MCF 10A (cell line): ENCODE measurements at regions of chr2 and their contacts with region 1.

Region 1: DNA sequence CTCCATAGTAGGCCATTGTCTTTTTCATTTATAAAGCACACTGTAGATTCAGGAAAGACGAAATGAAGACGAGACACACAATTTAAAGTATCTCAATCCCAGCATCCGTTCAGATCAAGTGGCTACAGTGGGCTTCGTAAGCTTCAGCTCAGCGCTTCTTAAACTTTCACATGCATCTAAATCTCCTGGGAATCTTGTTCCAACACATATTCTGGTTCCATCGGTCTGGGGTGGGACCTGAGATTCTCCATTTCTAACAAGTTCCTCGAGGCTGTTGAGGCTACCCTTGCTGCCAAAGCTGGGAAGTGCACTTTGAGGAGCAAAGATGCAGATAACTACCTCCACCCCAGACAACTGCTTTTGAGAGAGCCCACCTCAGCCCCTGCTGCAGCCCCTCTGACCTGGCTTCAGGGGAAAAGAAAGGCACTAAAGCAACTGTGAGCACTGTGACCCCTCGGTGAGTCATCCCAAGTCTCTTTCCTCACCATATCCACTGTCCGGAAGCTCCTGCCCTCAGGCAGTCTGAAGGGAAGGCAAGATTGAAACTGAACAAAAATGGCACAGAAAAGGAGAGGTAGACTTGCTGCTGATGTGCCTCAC is 201.1 kb upstream of the FBXO11 start:
- DNase-seq: peak; percentile 97
- H3K4me3 Mint-ChIP-seq: peak overlapping the region; percentile 62
- H3K27ac Mint-ChIP-seq: peak overlapping the region; percentile 89
- H3K4me1 Mint-ChIP-seq: peaks cover 22% of the 10 kb centered on the region
- H3K27me3 Mint-ChIP-seq: no peaks in the 10 kb centered on the region
- CTCF ChIP-seq: no peak

Region 2: DNA sequence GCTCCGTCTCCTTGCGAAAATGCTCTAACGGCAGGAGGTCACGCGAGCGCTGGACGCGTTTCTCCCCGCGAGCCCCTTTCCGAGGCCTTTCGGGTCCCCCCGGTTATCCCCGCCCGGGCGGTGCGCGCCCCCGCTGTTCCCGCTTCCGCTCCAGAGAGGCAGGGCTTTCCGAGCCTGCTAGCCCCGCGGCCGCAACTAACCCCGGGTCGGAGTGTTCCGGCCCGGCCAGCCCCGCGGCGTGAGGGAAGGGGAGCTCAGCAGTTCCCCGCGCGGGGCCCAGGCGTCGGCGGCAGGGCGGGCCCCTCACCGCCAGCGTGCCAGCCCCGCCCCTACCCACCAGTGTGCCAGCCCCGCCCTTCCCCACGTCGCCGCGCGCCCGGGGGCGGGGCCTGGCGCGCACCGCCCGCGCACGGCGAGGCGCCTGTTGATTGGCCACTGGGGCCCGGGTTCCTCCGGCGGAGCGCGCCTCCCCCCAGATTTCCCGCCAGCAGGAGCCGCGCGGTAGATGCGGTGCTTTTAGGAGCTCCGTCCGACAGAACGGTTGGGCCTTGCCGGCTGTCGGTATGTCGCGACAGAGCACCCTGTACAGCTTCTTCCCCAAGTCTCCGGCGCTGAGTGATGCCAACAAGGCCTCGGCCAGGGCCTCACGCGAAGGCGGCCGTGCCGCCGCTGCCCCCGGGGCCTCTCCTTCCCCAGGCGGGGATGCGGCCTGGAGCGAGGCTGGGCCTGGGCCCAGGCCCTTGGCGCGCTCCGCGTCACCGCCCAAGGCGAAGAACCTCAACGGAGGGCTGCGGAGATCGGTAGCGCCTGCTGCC is 324.5 kb before region 1 on chr2 and contains the start of gene MSH6:
- CTCF ChIA-PET with region 1: no interaction called
- POLR2A ChIA-PET with region 1: interaction called, 5 read pairs
- intact Hi-C with region 1: loop called (anchors 1 kb)
- DNase-seq: peak; percentile 86
- H3K4me3 Mint-ChIP-seq: peak within 1 kb of the TSS; percentile 92
- H3K27ac Mint-ChIP-seq: peak within 1 kb of the TSS; percentile 75
- H3K4me1 Mint-ChIP-seq: peaks cover 14% of the 10 kb centered on the region
- H3K27me3 Mint-ChIP-seq: no peaks in the 10 kb centered on the region
- CTCF ChIP-seq: no peak
- total RNA-seq, gene MSH6: 40.3 and 45.3 TPM in 2 replicates

Region 3: GRCh38 chr2:47849368-47849767 is 258.1 kb before region 1 on chr2:
- CTCF ChIA-PET with region 1: interaction called, 14 read pairs
- POLR2A ChIA-PET with region 1: interaction called, 3 read pairs
- intact Hi-C with region 1: no loop called
- DNase-seq: no peak
- H3K4me3 Mint-ChIP-seq: no peak overlapping the region
- H3K27ac Mint-ChIP-seq: no peak overlapping the region
- H3K4me1 Mint-ChIP-seq: peaks cover 16% of the 10 kb centered on the region
- H3K27me3 Mint-ChIP-seq: no peaks in the 10 kb centered on the region
- CTCF ChIP-seq: no peak

Region 4: DNA sequence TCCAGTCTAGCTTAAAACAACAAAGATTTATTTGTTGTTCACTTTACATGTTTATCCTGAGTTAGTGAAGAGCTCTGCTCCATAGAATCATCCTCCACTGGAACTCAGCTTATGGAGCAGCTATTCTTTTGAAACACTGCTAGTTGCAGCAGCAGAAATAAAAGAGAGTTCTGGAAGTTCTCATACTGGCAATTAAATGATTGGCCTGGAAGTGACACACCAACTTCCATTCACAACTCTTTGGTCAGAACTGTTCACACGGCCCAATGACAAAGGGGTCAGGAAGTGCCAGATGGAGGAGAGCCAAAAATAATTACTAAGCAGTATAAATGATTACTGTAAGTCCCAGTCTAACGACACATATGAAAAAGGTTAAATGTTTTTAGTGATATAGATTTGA is 240.2 kb before region 1 on chr2:
- CTCF ChIA-PET with region 1: interaction called, 17 read pairs
- POLR2A ChIA-PET with region 1: interaction called, 3 read pairs
- intact Hi-C with region 1: no loop called
- DNase-seq: peak; percentile 87
- H3K4me3 Mint-ChIP-seq: peak overlapping the region; percentile 4
- H3K27ac Mint-ChIP-seq: peak overlapping the region; percentile 34
- H3K4me1 Mint-ChIP-seq: peaks cover 22% of the 10 kb centered on the region
- H3K27me3 Mint-ChIP-seq: no peaks in the 10 kb centered on the region
- CTCF ChIP-seq: no peak

Region 5: DNA sequence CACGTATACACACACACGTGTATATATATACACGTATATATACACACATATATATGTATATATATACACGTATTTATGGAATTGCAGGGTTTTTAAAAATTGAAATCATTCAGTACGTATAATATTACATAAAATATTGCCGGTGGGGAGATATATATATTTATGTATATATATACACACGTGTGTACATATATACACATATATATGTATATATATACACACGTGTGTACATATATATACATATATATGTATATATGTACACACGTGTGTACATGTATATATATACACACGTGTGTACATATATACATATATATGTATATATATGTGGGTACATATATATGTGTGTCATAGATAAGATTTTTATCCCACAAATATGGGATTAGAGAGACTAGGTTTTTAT is 206.6 kb before region 1 on chr2:
- CTCF ChIA-PET with region 1: interaction called, 4 read pairs
- POLR2A ChIA-PET with region 1: interaction called, 11 read pairs
- intact Hi-C with region 1: loop called (anchors 1 kb)
- DNase-seq: no peak
- H3K4me3 Mint-ChIP-seq: no peak overlapping the region
- H3K27ac Mint-ChIP-seq: no peak overlapping the region
- H3K4me1 Mint-ChIP-seq: peaks cover 19% of the 10 kb centered on the region
- H3K27me3 Mint-ChIP-seq: no peaks in the 10 kb centered on the region
- CTCF ChIP-seq: no peak

Region 6: DNA sequence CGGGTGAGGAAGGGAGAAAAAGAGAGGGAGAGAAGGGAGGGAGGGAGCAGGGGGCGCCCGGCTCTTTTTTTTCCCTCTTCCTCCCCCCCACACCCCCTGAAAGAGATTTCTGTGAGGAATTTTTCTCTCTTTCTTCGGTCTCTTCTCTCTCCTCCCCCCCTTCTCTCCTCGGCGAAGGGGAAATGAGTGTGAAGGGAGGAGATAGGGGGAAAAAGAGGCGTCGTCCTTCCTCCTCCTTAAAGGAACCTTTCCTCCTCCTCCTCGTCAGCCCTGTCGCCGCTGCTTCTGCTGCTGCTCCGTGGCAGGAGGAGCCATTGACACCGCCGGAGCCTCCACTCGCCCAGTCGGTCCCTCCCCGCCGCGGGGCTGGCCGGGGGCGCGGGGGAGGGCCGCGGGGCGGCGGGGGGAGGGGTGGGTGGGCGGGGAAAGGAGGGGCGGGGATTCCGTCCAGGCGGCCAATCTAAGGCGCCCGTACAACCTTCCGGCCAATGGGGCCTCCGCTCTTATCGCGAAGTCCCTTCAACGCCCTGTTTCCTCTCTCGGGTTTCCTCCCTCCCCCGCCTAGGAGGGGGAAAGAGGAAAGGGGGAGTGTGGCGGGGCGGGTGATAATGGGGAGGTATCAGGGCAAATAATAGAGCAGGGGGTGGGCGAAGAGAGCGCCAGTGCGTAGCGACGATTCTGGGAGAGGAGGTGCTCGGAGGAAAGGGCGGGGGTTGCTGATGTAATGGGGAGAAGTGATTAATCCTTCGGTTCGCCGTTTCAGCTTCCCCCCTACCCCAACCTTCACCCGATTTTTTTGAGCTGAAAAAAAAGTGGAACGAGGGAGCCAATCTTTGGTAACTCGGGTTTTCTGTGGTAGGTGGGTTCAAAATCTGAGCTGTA is 201.0 kb before region 1 on chr2 and contains the start of gene FBXO11:
- CTCF ChIA-PET with region 1: interaction called, 13 read pairs
- POLR2A ChIA-PET with region 1: interaction called, 11 read pairs
- intact Hi-C with region 1: loop called (anchors 1 kb)
- DNase-seq: peak; percentile 99
- H3K4me3 Mint-ChIP-seq: peak within 1 kb of the TSS; percentile 92
- H3K27ac Mint-ChIP-seq: peak within 1 kb of the TSS; percentile 97
- H3K4me1 Mint-ChIP-seq: peaks cover 18% of the 10 kb centered on the region
- H3K27me3 Mint-ChIP-seq: no peaks in the 10 kb centered on the region
- CTCF ChIP-seq: peak; percentile 38
- total RNA-seq, gene FBXO11: 60.4 and 64.1 TPM in 2 replicates

Region 7: GRCh38 chr2:48080534-48081316 is 26.7 kb before region 1 on chr2:
- CTCF ChIA-PET with region 1: no interaction called
- POLR2A ChIA-PET with region 1: no interaction called
- intact Hi-C with region 1: no loop called
- DNase-seq: no peak
- H3K4me3 Mint-ChIP-seq: no peak overlapping the region
- H3K27ac Mint-ChIP-seq: no peak overlapping the region
- H3K4me1 Mint-ChIP-seq: no peaks in the 10 kb centered on the region
- H3K27me3 Mint-ChIP-seq: no peaks in the 10 kb centered on the region
- CTCF ChIP-seq: no peak